Activated naive CD4-positive, alpha-beta T cell treated with anti-CD3 and anti-CD28 coated beads for 36 hours (primary cell): ENCODE measurements at regions of chr15 and their contacts with region 1.

Region 1: GRCh38 chr15:83011271-83012075 is at the start of gene C15orf40:
- DNase-seq: peak; percentile 88
- H3K4me3 Mint-ChIP-seq: peak within 1 kb of the TSS; percentile 87
- H3K27ac Mint-ChIP-seq: peak within 1 kb of the TSS; percentile 81
- H3K4me1 Mint-ChIP-seq: peaks cover 48% of the 10 kb centered on the region
- H3K27me3 Mint-ChIP-seq: no peaks in the 10 kb centered on the region
- total RNA-seq, gene C15orf40: 20.6 to 21.7 TPM

Region 2: GRCh38 chr15:82680200-82681102 is 331.0 kb before region 1 on chr15:
- CTCF ChIA-PET with region 1: no interaction called
- intact Hi-C with region 1: loop called (anchors 5 kb)
- DNase-seq: peak; percentile 86
- H3K4me3 Mint-ChIP-seq: peak overlapping the region; percentile 88
- H3K27ac Mint-ChIP-seq: peak overlapping the region; percentile 47
- H3K4me1 Mint-ChIP-seq: peaks cover 7% of the 10 kb centered on the region
- H3K27me3 Mint-ChIP-seq: peaks cover 2% of the 10 kb centered on the region

Region 3: GRCh38 chr15:82985688-82986441 is 25.6 kb before region 1 on chr15 and contains the start of gene RAMAC:
- CTCF ChIA-PET with region 1: interaction called, 12 read pairs
- intact Hi-C with region 1: loop called (anchors 1 kb)
- DNase-seq: peak; percentile 96
- H3K4me3 Mint-ChIP-seq: peak within 1 kb of the TSS; percentile 96
- H3K27ac Mint-ChIP-seq: peak within 1 kb of the TSS; percentile 94
- H3K4me1 Mint-ChIP-seq: peaks cover 25% of the 10 kb centered on the region
- H3K27me3 Mint-ChIP-seq: no peaks in the 10 kb centered on the region
- total RNA-seq, gene RAMAC: 15.3 to 15.6 TPM

Region 4: GRCh38 chr15:83066734-83067637 is 55.5 kb after region 1 on chr15 and contains the start of gene BTBD1:
- CTCF ChIA-PET with region 1: interaction called, 4 read pairs
- intact Hi-C with region 1: loop called (anchors 1 kb)
- DNase-seq: peak; percentile 92
- H3K4me3 Mint-ChIP-seq: peak within 1 kb of the TSS; percentile 84
- H3K27ac Mint-ChIP-seq: peak within 1 kb of the TSS; percentile 83
- H3K4me1 Mint-ChIP-seq: peaks cover 22% of the 10 kb centered on the region
- H3K27me3 Mint-ChIP-seq: no peaks in the 10 kb centered on the region
- total RNA-seq, gene BTBD1: 45.2 to 46.1 TPM

Region 5: GRCh38 chr15:83164111-83164770 is 152.8 kb after region 1 on chr15:
- CTCF ChIA-PET with region 1: no interaction called
- intact Hi-C with region 1: loop called (anchors 5 kb)
- DNase-seq: no peak
- H3K4me3 Mint-ChIP-seq: no peak overlapping the region
- H3K27ac Mint-ChIP-seq: no peak overlapping the region
- H3K4me1 Mint-ChIP-seq: peaks cover 14% of the 10 kb centered on the region
- H3K27me3 Mint-ChIP-seq: peaks cover 29% of the 10 kb centered on the region

Region 6: GRCh38 chr15:83380682-83381081 is 369.2 kb after region 1 on chr15:
- CTCF ChIA-PET with region 1: no interaction called
- intact Hi-C with region 1: loop called (anchors 1 kb)
- DNase-seq: peak; percentile 74
- H3K4me3 Mint-ChIP-seq: no peak overlapping the region
- H3K27ac Mint-ChIP-seq: no peak overlapping the region
- H3K4me1 Mint-ChIP-seq: no peaks in the 10 kb centered on the region
- H3K27me3 Mint-ChIP-seq: peaks cover 45% of the 10 kb centered on the region

Region 7: GRCh38 chr15:83559310-83559966 is 548.0 kb after region 1 on chr15:
- CTCF ChIA-PET with region 1: no interaction called
- intact Hi-C with region 1: loop called (anchors 1 kb)
- DNase-seq: peak; percentile 69
- H3K4me3 Mint-ChIP-seq: no peak overlapping the region
- H3K27ac Mint-ChIP-seq: no peak overlapping the region
- H3K4me1 Mint-ChIP-seq: no peaks in the 10 kb centered on the region
- H3K27me3 Mint-ChIP-seq: peaks cover 10% of the 10 kb centered on the region